Calu3 (cell line): ENCODE measurements at regions of chr16 and their contacts with region 1.

Region 1: GRCh38 chr16:10509534-10510025 is 70.8 kb downstream of the EMP2 start:
- DNase-seq: peak; percentile 87
- H3K4me3 Mint-ChIP-seq: no peak overlapping the region
- H3K27ac Mint-ChIP-seq: no peak overlapping the region
- H3K4me1 Mint-ChIP-seq: peaks cover 7% of the 10 kb centered on the region
- H3K27me3 Mint-ChIP-seq: no peaks in the 10 kb centered on the region
- CTCF ChIP-seq: peak; percentile 84

Region 2: DNA sequence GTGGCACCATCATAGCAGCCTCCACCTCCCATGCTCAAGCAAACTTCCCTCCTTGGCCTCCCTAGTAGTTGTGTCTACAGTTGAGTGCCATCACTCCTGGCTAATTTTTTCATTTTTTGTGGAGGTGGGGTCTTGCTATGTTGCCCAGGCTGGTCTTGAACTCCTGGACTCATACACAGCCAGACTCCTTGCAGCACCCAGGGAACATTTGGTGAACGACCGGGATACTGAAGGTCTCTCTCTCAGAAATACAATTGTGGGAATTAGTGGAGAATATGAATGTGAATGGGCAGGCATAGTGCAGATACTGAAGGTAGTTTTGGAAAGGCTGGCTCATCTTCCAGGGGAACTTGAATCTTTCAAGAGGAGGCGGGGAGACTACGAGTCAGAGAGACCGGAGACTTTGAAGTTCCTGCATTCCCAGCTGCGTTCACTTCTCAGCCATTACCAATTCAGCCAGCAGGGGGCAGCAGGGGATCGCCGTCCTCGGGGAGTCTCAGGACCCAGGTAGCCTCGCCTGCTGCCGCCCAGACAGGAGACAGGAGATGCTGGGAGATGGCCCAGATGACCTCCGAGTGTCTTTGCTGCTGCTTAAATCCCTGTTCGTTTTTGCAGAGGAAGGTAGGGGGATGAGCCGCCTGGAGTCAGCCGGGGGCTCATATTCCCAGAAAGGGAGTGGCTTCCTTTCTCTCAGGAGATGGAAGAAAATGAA is 1349.6 kb before region 1 on chr16:
- CTCF ChIA-PET with region 1: no interaction called
- intact Hi-C with region 1: loop called (anchors 5 kb)
- DNase-seq: peak; percentile 89
- H3K4me3 Mint-ChIP-seq: no peak overlapping the region
- H3K27ac Mint-ChIP-seq: no peak overlapping the region
- H3K4me1 Mint-ChIP-seq: no peaks in the 10 kb centered on the region
- H3K27me3 Mint-ChIP-seq: peaks cover 7% of the 10 kb centered on the region
- CTCF ChIP-seq: peak; percentile 90

Region 3: DNA sequence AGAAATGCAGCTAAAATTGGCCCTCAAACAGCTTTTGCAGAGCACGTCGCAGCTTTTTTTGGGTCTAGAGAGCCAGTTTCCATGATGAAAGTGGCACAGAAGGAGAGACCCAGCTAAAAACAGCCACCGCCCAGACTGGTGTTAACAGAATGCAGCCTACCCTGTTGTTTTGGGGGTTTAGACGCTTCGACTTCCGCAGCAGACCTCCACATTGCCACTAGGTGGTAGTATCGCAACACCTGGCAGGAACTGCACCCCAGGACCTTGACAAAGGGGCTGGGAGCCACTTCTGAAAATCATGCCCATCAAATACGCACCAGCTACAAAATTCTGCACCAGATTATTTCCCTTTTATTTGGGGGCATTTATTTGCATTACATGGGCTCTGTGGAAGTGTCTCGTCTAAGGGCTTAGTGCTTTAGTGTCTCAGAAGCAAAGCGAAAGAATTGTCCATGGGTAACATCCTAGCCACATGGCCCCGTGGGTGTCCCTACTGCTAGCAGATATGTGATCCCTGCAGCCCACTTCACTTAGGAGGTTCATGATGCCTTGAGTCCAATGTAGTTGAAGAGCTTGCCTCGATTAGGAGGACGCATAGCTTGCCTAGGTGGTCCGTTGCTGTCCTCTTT is 1251.0 kb before region 1 on chr16:
- CTCF ChIA-PET with region 1: no interaction called
- intact Hi-C with region 1: loop called (anchors 10 kb)
- DNase-seq: peak; percentile 61
- H3K4me3 Mint-ChIP-seq: no peak overlapping the region
- H3K27ac Mint-ChIP-seq: no peak overlapping the region
- H3K4me1 Mint-ChIP-seq: peaks cover 27% of the 10 kb centered on the region
- H3K27me3 Mint-ChIP-seq: peaks cover 37% of the 10 kb centered on the region
- CTCF ChIP-seq: peak; percentile 81

Region 4: GRCh38 chr16:9647981-9648712 is 861.4 kb before region 1 on chr16:
- CTCF ChIA-PET with region 1: no interaction called
- intact Hi-C with region 1: loop called (anchors 5 kb)
- DNase-seq: peak; percentile 53
- H3K4me3 Mint-ChIP-seq: no peak overlapping the region
- H3K27ac Mint-ChIP-seq: no peak overlapping the region
- H3K4me1 Mint-ChIP-seq: peaks cover 22% of the 10 kb centered on the region
- H3K27me3 Mint-ChIP-seq: no peaks in the 10 kb centered on the region
- CTCF ChIP-seq: peak; percentile 77

Region 5: GRCh38 chr16:10256784-10257641 is 252.6 kb before region 1 on chr16:
- CTCF ChIA-PET with region 1: interaction called, 10 read pairs
- intact Hi-C with region 1: loop called (anchors 1 kb)
- DNase-seq: peak; percentile 52
- H3K4me3 Mint-ChIP-seq: peak overlapping the region; percentile 13
- H3K27ac Mint-ChIP-seq: no peak overlapping the region
- H3K4me1 Mint-ChIP-seq: peaks cover 18% of the 10 kb centered on the region
- H3K27me3 Mint-ChIP-seq: peaks cover 9% of the 10 kb centered on the region
- CTCF ChIP-seq: peak; percentile 82

Region 6: DNA sequence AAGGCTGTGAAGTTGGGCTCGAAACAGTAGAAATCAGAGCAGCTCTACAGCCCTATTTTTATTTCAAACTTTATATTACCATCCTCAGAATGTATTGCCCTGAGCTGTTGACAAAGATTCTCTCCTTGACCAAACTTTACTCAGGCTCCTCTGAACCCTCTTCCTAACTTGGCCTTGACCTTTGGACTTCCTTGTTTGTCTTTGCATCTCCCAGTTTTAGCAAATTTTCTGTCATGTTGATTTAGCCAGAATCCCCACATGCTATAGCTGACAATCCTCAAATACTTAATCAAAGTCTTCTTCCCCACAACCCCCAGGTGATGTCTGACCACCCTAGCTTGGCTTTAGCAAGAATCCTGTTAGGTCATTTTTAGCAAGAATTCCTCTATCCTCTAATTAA is 239.9 kb before region 1 on chr16:
- CTCF ChIA-PET with region 1: no interaction called
- intact Hi-C with region 1: no loop called
- DNase-seq: no peak
- H3K4me3 Mint-ChIP-seq: no peak overlapping the region
- H3K27ac Mint-ChIP-seq: no peak overlapping the region
- H3K4me1 Mint-ChIP-seq: no peaks in the 10 kb centered on the region
- H3K27me3 Mint-ChIP-seq: no peaks in the 10 kb centered on the region
- CTCF ChIP-seq: no peak

Region 7: DNA sequence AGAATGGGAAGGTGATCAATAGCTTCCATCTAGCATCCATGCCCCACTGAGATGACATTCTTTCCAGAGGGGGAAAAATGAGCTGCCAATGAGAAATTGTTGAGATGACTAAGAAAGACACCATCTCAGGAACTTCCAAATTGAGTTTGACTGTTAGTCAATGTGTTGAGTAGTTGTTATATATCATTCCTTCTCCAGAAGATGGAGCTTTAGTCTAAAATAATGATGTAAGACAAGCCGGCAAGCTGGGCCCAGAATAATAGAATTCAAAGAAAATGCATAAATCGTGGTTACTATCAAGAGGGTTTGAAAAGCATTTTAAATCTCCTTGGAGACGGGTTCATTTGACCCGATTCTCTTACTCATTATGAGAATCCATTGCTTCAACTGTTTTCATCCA is 194.8 kb before region 1 on chr16:
- CTCF ChIA-PET with region 1: interaction called, 26 read pairs
- intact Hi-C with region 1: loop called (anchors 1 kb)
- DNase-seq: no peak
- H3K4me3 Mint-ChIP-seq: no peak overlapping the region
- H3K27ac Mint-ChIP-seq: no peak overlapping the region
- H3K4me1 Mint-ChIP-seq: peaks cover 23% of the 10 kb centered on the region
- H3K27me3 Mint-ChIP-seq: no peaks in the 10 kb centered on the region
- CTCF ChIP-seq: no peak

Region 8: DNA sequence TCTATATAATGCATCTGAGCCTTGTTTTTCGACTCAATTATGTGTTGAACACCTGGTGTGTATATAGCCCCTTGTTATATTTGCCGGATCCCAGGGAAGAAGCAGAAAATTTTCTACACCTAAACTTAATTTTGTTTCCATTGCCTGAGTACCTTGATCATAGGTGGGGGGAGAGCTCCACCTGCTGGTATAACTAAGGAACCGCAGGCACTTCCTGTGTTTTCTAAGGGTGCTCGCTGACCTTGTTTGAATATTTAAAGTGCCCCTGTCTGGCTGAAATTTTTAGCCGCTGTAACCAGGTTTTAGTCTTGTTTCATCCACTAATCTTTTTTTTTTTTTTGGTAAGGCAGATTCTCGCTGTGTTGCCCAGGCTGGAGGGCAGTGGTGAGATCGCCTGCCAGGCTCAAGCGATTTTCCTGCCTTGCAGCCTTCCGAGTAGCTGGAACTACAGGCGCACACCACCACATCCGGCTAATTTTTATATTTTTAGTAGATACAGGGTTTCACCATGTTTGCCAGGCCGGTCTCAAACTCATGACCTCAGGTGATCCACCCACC is 227.6 kb after region 1 on chr16:
- CTCF ChIA-PET with region 1: interaction called, 46 read pairs
- intact Hi-C with region 1: loop called (anchors 1 kb)
- DNase-seq: peak; percentile 79
- H3K4me3 Mint-ChIP-seq: peak overlapping the region; percentile 29
- H3K27ac Mint-ChIP-seq: peak overlapping the region; percentile 19
- H3K4me1 Mint-ChIP-seq: peaks cover 35% of the 10 kb centered on the region
- H3K27me3 Mint-ChIP-seq: no peaks in the 10 kb centered on the region
- CTCF ChIP-seq: peak; percentile 94